Left colon (tissue), 2 donors: ENCODE measurements at regions of chr2 and their contacts with region 1.

Region 1: GRCh38 chr2:191165176-191165643 is 14.4 kb upstream of the STAT4 start:
- DNase-seq: no peak
- ATAC-seq: peak; percentile 76

Region 2: DNA sequence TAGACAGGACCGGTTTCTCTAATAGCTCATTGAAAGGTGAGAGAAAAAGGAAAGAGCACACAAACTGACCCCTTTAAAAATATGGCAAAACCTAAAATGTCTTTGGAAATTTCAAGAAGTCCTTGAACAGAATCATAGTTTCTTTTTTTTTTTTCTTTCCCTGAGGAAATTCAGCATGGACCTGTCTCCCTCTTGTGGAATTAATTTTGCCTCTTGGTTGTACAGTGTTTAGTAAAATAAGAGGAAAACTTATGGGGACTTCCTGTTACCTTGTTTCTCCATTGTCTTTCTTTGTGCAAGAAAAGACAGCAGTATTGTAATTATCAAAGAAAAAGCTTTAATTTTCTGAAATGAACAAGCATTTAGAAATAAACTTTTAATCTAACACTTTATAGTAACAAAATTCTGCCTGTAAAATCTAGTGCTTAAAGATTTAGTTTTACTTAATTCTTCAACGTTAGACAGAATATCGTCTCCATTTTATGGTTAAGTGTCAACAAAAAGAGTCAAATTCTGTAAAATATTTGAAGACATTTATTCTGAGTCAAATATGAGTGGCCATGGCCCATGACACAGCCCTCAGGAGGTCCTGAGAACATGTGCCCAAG is 336.5 kb after region 1 on chr2:
- intact Hi-C with region 1: loop called in 1 of 2 experiments (anchors 5 kb)
- DNase-seq: no peak
- ATAC-seq: peak; percentile 79

Region 3: GRCh38 chr2:191521608-191522208 is 356.5 kb after region 1 on chr2:
- intact Hi-C with region 1: loop called (anchors 2 to 10 kb)
- DNase-seq: no peak
- ATAC-seq: no peak

Region 4: DNA sequence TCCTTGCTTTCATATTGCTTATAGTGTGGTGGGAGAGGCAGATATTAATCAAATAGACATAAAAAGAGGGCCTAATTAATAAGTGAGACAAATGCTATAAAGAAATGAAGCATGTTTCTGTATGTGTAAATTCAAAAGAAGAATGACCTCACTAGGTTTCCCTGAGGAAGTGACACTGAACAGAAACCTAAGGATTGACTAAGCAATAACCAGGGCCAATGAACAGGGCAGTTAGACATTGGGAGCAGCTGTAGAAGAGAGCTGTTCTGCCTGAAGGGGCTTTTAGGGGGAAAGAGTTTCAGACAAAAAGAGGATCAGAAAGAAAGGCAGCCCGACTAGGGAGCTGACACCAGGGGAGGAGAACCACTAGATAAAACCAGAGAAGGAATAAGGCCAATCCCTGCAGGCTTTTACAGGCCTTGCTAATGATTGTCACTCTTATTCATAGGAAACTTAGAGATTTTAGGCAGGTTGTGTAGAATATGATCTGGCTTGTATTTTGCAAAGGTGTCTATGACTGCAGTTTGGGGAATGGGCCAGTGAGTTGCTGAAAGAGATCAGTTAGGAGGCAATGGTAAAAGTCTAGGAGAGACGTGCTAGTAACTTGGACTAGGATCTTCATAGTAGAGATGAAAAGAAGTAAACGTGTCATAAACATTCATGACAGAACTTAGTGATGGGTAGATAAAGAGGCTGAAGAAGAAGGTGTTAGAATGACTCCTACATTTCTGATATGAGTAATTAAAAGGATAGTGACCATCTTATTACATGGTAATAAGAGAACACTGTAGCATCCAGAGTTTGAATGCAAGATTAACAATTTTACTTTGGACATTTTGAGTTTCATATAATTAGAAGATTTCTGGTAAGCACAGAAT is 485.9 kb after region 1 on chr2:
- intact Hi-C with region 1: no loop called
- DNase-seq: no peak
- ATAC-seq: no peak